ENCODE measurements at regions of chr19 and their contacts with region 1.

Region 1: DNA sequence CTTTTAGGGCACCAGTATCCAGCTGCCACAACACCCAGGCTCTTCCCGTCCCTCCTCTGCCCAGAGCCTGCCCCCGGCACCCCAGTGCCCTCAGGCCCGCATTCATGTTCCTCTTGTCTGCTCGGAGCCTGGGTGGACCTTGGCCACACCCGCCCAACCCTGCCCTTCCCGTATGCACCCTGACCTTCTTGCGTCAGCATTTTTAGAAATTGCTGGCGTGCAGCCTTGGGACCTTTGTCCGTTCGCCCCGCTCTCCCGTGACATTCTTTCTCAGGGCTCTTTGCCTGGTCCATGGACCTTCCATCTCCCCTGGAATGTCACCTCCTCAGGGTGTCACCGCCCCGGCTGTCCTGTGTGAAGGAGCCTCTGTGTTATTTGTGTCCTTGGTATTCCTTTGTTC is 7.6 kb downstream of the NUCB1 start:
- DNase-seq: peak in 1 of 35 experiments; percentile 3
- ATAC-seq: no peak
- H3K4me3 ChIP-seq: no peak overlapping the region
- H3K4me3 Mint-ChIP-seq: no peak overlapping the region
- H3K27ac ChIP-seq: no peak overlapping the region
- H3K27ac Mint-ChIP-seq: no peak overlapping the region
- H3K4me1 ChIP-seq: peaks cover 0 to 5% of the 10 kb centered on the region in 2 experiments
- H3K4me1 Mint-ChIP-seq: peaks cover 0 to 1% (median under 1%) of the 10 kb centered on the region in 3 donors
- H3K27me3 ChIP-seq: no peaks in the 10 kb centered on the region
- H3K27me3 Mint-ChIP-seq: no peaks in the 10 kb centered on the region

Region 2: DNA sequence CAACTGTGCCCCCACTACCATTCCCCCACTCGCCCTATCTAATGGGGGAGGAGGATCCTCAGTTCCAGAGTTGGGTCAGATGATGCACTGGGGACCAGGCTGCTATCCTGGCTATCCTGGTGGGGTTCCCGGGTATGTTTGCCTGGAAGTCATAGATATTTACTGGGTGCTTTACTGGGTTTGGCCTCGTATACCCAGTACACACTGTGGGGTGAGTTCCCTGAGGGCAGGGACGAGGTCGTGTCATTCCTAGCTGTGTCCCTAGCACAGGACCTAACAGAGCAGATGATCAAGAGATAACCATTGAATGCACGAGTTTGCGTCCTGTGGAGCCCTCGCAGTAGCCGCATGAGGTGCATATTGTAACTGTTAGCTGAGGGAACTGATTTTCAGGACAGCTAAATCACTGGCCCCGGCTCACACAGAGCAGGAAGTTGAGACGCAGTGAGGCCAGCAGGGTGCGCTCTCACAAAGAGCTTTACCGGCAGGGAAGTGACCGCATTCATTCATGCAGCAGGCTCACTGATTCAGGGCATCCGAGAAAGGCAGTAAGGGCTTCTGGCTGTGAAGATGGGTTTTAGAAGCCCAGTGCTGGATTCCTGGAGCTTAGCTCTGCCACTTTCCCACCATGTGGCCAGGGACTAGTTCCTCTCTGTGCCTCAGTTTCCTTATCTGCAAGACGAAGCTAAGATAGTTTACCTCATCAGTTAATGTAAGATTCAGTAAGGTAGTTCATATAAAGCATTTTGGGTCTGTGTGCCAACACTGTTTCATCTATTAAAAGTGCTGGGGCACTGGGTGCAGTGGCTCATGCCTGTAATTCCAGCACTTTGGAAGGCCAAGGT is 92.0 kb after region 1 on chr19:
- CTCF ChIA-PET with region 1: interaction called in 1 of 2 experiments, 4 read pairs
- POLR2A ChIA-PET with region 1: interaction called in 1 of 2 experiments, 12 read pairs
- DNase-seq: peak; percentile 42 to 76 (median 63)
- ATAC-seq: peak; percentile 75 to 89 (median 84)
- H3K4me3 ChIP-seq: no peak overlapping the region
- H3K4me3 Mint-ChIP-seq: no peak overlapping the region
- H3K27ac ChIP-seq: no peak overlapping the region
- H3K27ac Mint-ChIP-seq: no peak overlapping the region
- H3K4me1 ChIP-seq: peaks cover 0 to 15% of the 10 kb centered on the region in 2 experiments
- H3K4me1 Mint-ChIP-seq: peaks cover 15 to 21% (median 20%) of the 10 kb centered on the region in 3 donors
- H3K27me3 ChIP-seq: no peaks in the 10 kb centered on the region
- H3K27me3 Mint-ChIP-seq: no peaks in the 10 kb centered on the region